Activated naive CD4-positive, alpha-beta T cell treated with anti-CD3 and anti-CD28 coated beads for 36 hours (primary cell): ENCODE measurements at regions of chr2 and their contacts with region 1.

Region 1: GRCh38 chr2:99337113-99338028 is at the start of gene EIF5B:
- DNase-seq: peak; percentile 92
- H3K4me3 Mint-ChIP-seq: no peak within 1 kb of the TSS
- H3K27ac Mint-ChIP-seq: no peak within 1 kb of the TSS
- H3K4me1 Mint-ChIP-seq: peaks cover 49% of the 10 kb centered on the region
- H3K27me3 Mint-ChIP-seq: no peaks in the 10 kb centered on the region
- total RNA-seq, gene EIF5B: 70.2 to 71.1 TPM

Region 2: GRCh38 chr2:97718051-97718882 is 1619.1 kb before region 1 on chr2:
- CTCF ChIA-PET with region 1: no interaction called
- intact Hi-C with region 1: loop called (anchors 10 kb)
- DNase-seq: peak; percentile 84
- H3K4me3 Mint-ChIP-seq: peak overlapping the region; percentile 85
- H3K27ac Mint-ChIP-seq: peak overlapping the region; percentile 95
- H3K4me1 Mint-ChIP-seq: peaks cover 71% of the 10 kb centered on the region
- H3K27me3 Mint-ChIP-seq: no peaks in the 10 kb centered on the region

Region 3: GRCh38 chr2:99085421-99085820 is 251.9 kb before region 1 on chr2:
- CTCF ChIA-PET with region 1: no interaction called
- intact Hi-C with region 1: loop called (anchors 5 kb)
- DNase-seq: peak; percentile 32
- H3K4me3 Mint-ChIP-seq: no peak overlapping the region
- H3K27ac Mint-ChIP-seq: no peak overlapping the region
- H3K4me1 Mint-ChIP-seq: peaks cover 5% of the 10 kb centered on the region
- H3K27me3 Mint-ChIP-seq: peaks cover 3% of the 10 kb centered on the region

Region 4: GRCh38 chr2:99180755-99181623 is 156.4 kb before region 1 on chr2 and contains the starts of genes MITD1 and MRPL30:
- CTCF ChIA-PET with region 1: interaction called, 5 read pairs
- intact Hi-C with region 1: loop called (anchors 1 kb)
- DNase-seq: peak; percentile 94
- H3K4me3 Mint-ChIP-seq: peak within 1 kb of the TSS; percentile 95
- H3K27ac Mint-ChIP-seq: peak within 1 kb of the TSS; percentile 92
- H3K4me1 Mint-ChIP-seq: peaks cover 63% of the 10 kb centered on the region
- H3K27me3 Mint-ChIP-seq: no peaks in the 10 kb centered on the region
- total RNA-seq, gene MITD1: 61.4 to 64.1 TPM
- total RNA-seq, gene MRPL30: 40.2 to 43.3 TPM

Region 5: GRCh38 chr2:99403524-99403923 is 66.2 kb after region 1 on chr2:
- CTCF ChIA-PET with region 1: no interaction called
- intact Hi-C with region 1: loop called (anchors 2 kb)
- DNase-seq: peak; percentile 19
- H3K4me3 Mint-ChIP-seq: no peak overlapping the region
- H3K27ac Mint-ChIP-seq: peak overlapping the region; percentile 33
- H3K4me1 Mint-ChIP-seq: peaks cover 8% of the 10 kb centered on the region
- H3K27me3 Mint-ChIP-seq: no peaks in the 10 kb centered on the region